GM12878 (cell line): ENCODE measurements at regions of chr13 and their contacts with region 1.

Region 1: DNA sequence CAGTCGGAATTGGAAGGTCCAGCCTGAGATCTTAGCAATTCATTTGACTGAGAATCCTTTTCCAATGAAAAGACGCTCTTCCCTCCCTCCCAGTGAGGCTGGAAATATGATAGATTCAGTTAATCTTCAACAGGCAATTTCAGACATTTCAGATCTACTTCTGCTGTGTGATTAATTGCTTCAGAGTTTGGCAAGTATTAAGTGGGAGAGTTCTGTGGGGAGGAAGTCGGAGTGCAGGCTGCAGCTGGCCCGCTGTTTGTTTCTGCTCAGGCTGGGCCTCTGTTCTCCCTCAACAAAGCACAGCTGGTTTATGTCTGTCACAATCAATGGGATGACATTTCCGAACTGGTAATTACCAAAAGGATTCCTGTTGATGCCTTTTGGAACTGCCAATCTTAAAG is 178.2 kb downstream of the NDFIP2 start:
- DNase-seq: no peak
- ATAC-seq: peak; percentile 22; the same call in 1 of the 3 replicates
- H3K4me3 ChIP-seq: no peak overlapping the region
- H3K27ac ChIP-seq: no peak overlapping the region
- H3K4me1 ChIP-seq: no peaks in the 10 kb centered on the region
- H3K27me3 ChIP-seq: no peaks in the 10 kb centered on the region
- CTCF ChIP-seq: no peak
- EP300 ChIP-seq: no peak
- POLR2A ChIP-seq: no peak
- RAD21 ChIP-seq: no peak

Region 2: DNA sequence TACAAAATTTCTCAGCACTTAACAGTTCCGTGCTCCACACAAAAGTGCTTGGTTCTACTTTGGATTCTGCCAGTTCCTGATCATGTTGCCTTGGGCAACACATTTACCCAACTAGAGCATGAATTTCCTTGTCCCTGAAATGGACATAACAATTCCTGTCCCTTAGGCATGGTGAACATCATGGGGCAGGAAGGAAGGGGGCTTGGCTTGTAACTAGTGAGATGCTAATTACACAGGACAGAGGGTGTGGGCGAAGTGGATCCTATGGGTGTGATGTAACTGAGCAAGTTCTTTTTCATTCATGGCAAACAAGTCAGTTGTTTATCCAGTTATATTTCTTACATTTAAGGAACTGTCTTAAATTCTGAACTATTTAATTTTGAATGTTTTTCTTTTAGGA is 35.0 kb before region 1 on chr13:
- CTCF ChIA-PET with region 1: no interaction called
- POLR2A ChIA-PET with region 1: no interaction called
- RAD21 ChIA-PET with region 1: interaction called, 6 read pairs
- SMC1A ChIA-PET with region 1: interaction called, 30 read pairs
- in situ Hi-C with region 1: no loop called
- intact Hi-C with region 1: no loop called
- DNase-seq: no peak
- ATAC-seq: no peak
- H3K4me3 ChIP-seq: no peak overlapping the region
- H3K27ac ChIP-seq: no peak overlapping the region
- H3K4me1 ChIP-seq: no peaks in the 10 kb centered on the region
- H3K27me3 ChIP-seq: no peaks in the 10 kb centered on the region
- CTCF ChIP-seq: no peak
- EP300 ChIP-seq: no peak
- POLR2A ChIP-seq: no peak
- RAD21 ChIP-seq: no peak

Region 3: DNA sequence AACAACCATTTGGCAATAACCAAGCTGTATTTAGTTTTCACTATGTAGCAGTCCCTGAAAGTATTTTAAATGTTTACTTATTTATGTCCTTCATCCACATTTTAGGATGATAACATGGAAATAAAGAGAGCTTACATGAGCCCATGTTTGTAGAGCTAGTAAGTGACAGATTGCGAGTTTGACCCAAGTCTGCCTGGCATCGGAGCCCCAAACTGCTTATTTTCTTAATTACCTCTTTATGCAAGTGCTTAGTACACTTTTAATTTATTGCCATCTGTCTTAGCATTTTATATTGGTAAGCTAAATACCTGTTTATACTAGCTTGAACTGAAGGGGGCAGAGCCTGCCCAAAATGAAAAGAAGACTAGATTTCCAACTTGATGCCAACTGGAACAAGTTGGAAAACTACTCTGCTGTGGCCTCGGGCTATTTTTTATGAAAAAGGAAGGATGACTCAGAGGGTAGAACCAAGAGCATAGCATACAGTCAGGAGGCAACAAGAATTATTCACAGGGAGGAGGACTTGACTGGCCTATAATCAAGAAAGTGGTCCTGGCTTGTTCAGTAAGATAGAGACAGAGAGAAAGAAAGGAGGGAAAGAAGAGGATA is 28.0 kb before region 1 on chr13:
- CTCF ChIA-PET with region 1: interaction called, 10 read pairs
- POLR2A ChIA-PET with region 1: no interaction called
- RAD21 ChIA-PET with region 1: no interaction called
- SMC1A ChIA-PET with region 1: interaction called, 30 read pairs
- in situ Hi-C with region 1: no loop called
- intact Hi-C with region 1: no loop called
- DNase-seq: no peak
- ATAC-seq: no peak
- H3K4me3 ChIP-seq: no peak overlapping the region
- H3K27ac ChIP-seq: no peak overlapping the region
- H3K4me1 ChIP-seq: no peaks in the 10 kb centered on the region
- H3K27me3 ChIP-seq: no peaks in the 10 kb centered on the region
- CTCF ChIP-seq: no peak
- EP300 ChIP-seq: no peak
- POLR2A ChIP-seq: no peak
- RAD21 ChIP-seq: no peak

Region 4: DNA sequence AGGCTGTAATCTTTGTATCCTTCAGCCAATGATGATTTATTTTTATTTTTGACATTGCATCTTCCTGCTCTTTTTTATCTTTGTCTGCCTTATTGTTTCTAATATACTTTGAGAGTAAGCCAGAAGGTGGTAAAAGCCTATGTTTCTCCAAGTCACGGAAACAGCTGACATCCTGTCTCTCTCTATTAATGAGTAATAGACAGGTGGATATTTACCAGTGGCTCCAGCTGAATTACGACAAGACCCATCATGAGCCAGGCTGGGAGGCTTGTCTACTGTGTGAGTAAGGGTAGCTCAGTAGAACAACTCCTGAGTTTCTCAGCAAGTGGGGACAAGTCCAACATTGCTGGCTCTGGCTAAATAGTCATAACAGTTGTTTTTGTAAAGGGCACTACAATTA is 11.6 kb before region 1 on chr13:
- CTCF ChIA-PET with region 1: interaction called, 7 read pairs
- POLR2A ChIA-PET with region 1: interaction called, 4 read pairs
- RAD21 ChIA-PET with region 1: interaction called, 16 read pairs
- SMC1A ChIA-PET with region 1: interaction called, 33 read pairs
- in situ Hi-C with region 1: no loop called
- intact Hi-C with region 1: no loop called
- DNase-seq: no peak
- ATAC-seq: peak; percentile 30
- H3K4me3 ChIP-seq: no peak overlapping the region
- H3K27ac ChIP-seq: no peak overlapping the region
- H3K4me1 ChIP-seq: no peaks in the 10 kb centered on the region
- H3K27me3 ChIP-seq: peaks cover 0 to 2% of the 10 kb centered on the region in 2 experiments; a peak in 2 of 4 replicates
- CTCF ChIP-seq: no peak
- EP300 ChIP-seq: no peak
- POLR2A ChIP-seq: no peak
- RAD21 ChIP-seq: no peak

Region 5: GRCh38 chr13:79673310-79673992 is 14.3 kb after region 1 on chr13:
- CTCF ChIA-PET with region 1: interaction called, 38 read pairs
- POLR2A ChIA-PET with region 1: interaction called, 4 read pairs
- RAD21 ChIA-PET with region 1: interaction called, 16 read pairs
- SMC1A ChIA-PET with region 1: interaction called, 22 read pairs
- in situ Hi-C with region 1: no loop called
- intact Hi-C with region 1: no loop called
- DNase-seq: no peak
- ATAC-seq: no peak
- H3K4me3 ChIP-seq: no peak overlapping the region
- H3K27ac ChIP-seq: no peak overlapping the region
- H3K4me1 ChIP-seq: no peaks in the 10 kb centered on the region
- H3K27me3 ChIP-seq: no peaks in the 10 kb centered on the region
- CTCF ChIP-seq: no peak
- EP300 ChIP-seq: no peak
- POLR2A ChIP-seq: no peak
- RAD21 ChIP-seq: no peak